CD14-positive monocyte (primary cell): ENCODE measurements at regions of chr19 and their contacts with region 1.

Region 1: GRCh38 chr19:46513461-46514236 is 18.0 kb upstream of the PNMA8B start:
- DNase-seq: peak; percentile 65 to 73 (median 69)
- H3K4me3 ChIP-seq: no peak overlapping the region
- H3K4me3 Mint-ChIP-seq: no peak overlapping the region
- H3K27ac ChIP-seq: no peak overlapping the region
- H3K27ac Mint-ChIP-seq: peak overlapping the region in 2 of 7 donors; percentile 22 to 41
- H3K4me1 ChIP-seq: peaks cover 16 to 17% of the 10 kb centered on the region in 2 donors
- H3K4me1 Mint-ChIP-seq: peaks cover 10% of the 10 kb centered on the region
- H3K27me3 ChIP-seq: peaks cover 0 to 11% of the 10 kb centered on the region in 2 donors
- H3K27me3 Mint-ChIP-seq: peaks cover 11 to 24% (median 15%) of the 10 kb centered on the region in 3 donors
- CTCF ChIP-seq: peak; percentile 89

Region 2: GRCh38 chr19:46373421-46374359 is 140.0 kb before region 1 on chr19:
- intact Hi-C with region 1: no loop called
- DNase-seq: no peak
- H3K4me3 ChIP-seq: no peak overlapping the region
- H3K4me3 Mint-ChIP-seq: no peak overlapping the region
- H3K27ac ChIP-seq: no peak overlapping the region
- H3K27ac Mint-ChIP-seq: peak overlapping the region in 1 of 7 donors; percentile 6
- H3K4me1 ChIP-seq: no peaks in the 10 kb centered on the region
- H3K4me1 Mint-ChIP-seq: no peaks in the 10 kb centered on the region
- H3K27me3 ChIP-seq: no peaks in the 10 kb centered on the region
- H3K27me3 Mint-ChIP-seq: peaks cover 0 to 3% (median 2%) of the 10 kb centered on the region in 3 donors
- CTCF ChIP-seq: no peak

Region 3: GRCh38 chr19:46394402-46394797 is 119.2 kb before region 1 on chr19:
- intact Hi-C with region 1: loop called in 1 of 2 experiments (anchors 2 kb)
- DNase-seq: no peak
- H3K4me3 ChIP-seq: no peak overlapping the region
- H3K4me3 Mint-ChIP-seq: no peak overlapping the region
- H3K27ac ChIP-seq: no peak overlapping the region
- H3K27ac Mint-ChIP-seq: no peak overlapping the region
- H3K4me1 ChIP-seq: no peaks in the 10 kb centered on the region
- H3K4me1 Mint-ChIP-seq: no peaks in the 10 kb centered on the region
- H3K27me3 ChIP-seq: no peaks in the 10 kb centered on the region
- H3K27me3 Mint-ChIP-seq: peaks cover 3 to 18% (median 6%) of the 10 kb centered on the region in 3 donors
- CTCF ChIP-seq: no peak

Region 4: GRCh38 chr19:46404055-46404752 is 109.4 kb before region 1 on chr19:
- intact Hi-C with region 1: loop called in 1 of 2 experiments (anchors 2 kb)
- DNase-seq: peak in 2 of 3 donors; percentile 20 to 23
- H3K4me3 ChIP-seq: peak overlapping the region in 1 of 3 experiments; percentile 61
- H3K4me3 Mint-ChIP-seq: peak overlapping the region; percentile 56 to 91
- H3K27ac ChIP-seq: no peak overlapping the region
- H3K27ac Mint-ChIP-seq: peak overlapping the region in 3 of 7 donors; percentile 50 to 69 (median 68)
- H3K4me1 ChIP-seq: peaks cover 14 to 15% of the 10 kb centered on the region in 2 donors
- H3K4me1 Mint-ChIP-seq: peaks cover 19% of the 10 kb centered on the region
- H3K27me3 ChIP-seq: peaks cover 9 to 56% of the 10 kb centered on the region in 2 donors
- H3K27me3 Mint-ChIP-seq: peaks cover 69 to 83% (median 71%) of the 10 kb centered on the region in 3 donors
- CTCF ChIP-seq: peak; percentile 1

Region 5: DNA sequence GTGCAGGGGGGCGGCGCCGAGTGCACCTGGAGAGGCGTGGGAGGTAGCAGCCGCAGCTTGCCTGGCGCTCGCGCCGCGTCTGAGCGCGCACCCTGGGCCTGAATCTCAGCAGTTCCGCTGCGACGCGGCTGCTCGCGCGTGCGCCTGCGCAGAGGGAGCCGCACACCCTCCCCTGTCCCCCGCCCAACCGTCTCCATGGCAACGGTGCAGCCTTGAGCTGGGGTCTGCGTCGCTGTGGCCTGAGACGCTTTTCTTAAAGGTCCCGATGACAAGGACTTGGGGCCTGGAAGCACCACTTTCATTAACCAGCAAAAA is 17.9 kb before region 1 on chr19 and contains the start of gene PNMA8B:
- intact Hi-C with region 1: no loop called
- DNase-seq: no peak
- H3K4me3 ChIP-seq: no peak within 1 kb of the TSS
- H3K4me3 Mint-ChIP-seq: peak within 1 kb of the TSS in 1 of 2 donors; percentile 89
- H3K27ac ChIP-seq: no peak within 1 kb of the TSS
- H3K27ac Mint-ChIP-seq: no peak within 1 kb of the TSS
- H3K4me1 ChIP-seq: peaks cover 12 to 39% of the 10 kb centered on the region in 2 donors
- H3K4me1 Mint-ChIP-seq: peaks cover 20% of the 10 kb centered on the region
- H3K27me3 ChIP-seq: peaks cover 19 to 62% of the 10 kb centered on the region in 2 donors
- H3K27me3 Mint-ChIP-seq: peaks cover 59 to 82% (median 62%) of the 10 kb centered on the region in 3 donors
- CTCF ChIP-seq: no peak
- polyA plus RNA-seq, gene PNMA8B: 0.07 to 0.16 TPM in 2 of 3 donors, not detected in the other

Region 6: DNA sequence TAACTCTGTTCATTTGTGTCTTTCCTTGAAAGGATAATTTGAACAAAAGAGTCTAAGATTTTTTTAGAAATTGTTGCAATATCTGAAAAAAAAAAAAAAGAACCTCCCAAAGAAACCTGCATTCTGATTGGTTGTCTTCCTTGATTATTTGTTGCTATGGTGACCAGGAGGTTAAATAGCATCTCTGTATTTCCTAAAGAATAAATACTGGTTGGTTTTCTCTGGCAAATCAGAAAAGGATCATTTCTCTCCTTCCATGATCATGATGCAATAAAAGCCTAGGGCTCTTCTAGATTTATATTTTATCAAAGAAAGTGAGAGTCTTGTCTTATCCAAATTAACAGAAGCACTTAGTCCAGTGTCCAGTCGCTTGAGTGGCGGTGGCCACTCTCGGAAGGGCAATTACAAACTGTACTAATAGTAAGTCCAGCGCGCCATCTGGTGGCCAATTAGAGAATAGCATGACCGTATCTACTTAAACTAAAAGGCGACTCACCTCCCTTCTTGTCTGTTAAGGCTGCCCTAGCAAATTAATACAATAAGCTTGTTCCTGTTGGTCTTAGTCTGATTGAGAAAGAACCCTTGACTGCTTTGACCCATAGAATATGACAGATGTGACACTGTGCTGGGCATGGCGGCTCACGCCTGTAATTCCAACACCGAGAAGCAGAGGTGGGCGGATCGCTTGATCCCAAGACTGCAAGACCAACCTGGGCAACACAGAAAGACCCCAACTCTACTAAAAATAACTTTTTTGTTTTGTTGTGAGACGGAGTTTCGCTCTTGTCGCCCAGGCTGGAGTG is 29.0 kb after region 1 on chr19:
- intact Hi-C with region 1: loop called in 1 of 2 experiments (anchors 1 kb)
- DNase-seq: peak; percentile 88 to 97 (median 92)
- H3K4me3 ChIP-seq: no peak overlapping the region
- H3K4me3 Mint-ChIP-seq: peak overlapping the region in 1 of 2 donors; percentile 9
- H3K27ac ChIP-seq: no peak overlapping the region
- H3K27ac Mint-ChIP-seq: peak overlapping the region; percentile 42 to 97 (median 87)
- H3K4me1 ChIP-seq: peaks cover 24 to 48% of the 10 kb centered on the region in 2 donors
- H3K4me1 Mint-ChIP-seq: peaks cover 33% of the 10 kb centered on the region
- H3K27me3 ChIP-seq: no peaks in the 10 kb centered on the region
- H3K27me3 Mint-ChIP-seq: peaks cover 2 to 3% (median 2%) of the 10 kb centered on the region in 3 donors
- CTCF ChIP-seq: peak; percentile 91